PC-9 (cell line): ENCODE measurements at regions of chr10 and their contacts with region 1.

Region 1: GRCh38 chr10:77391605-77392235 is 245.9 kb downstream of the KCNMA1 start:
- DNase-seq: peak; percentile 53 to 74
- H3K4me3 ChIP-seq: no peak overlapping the region
- H3K27ac ChIP-seq: no peak overlapping the region
- H3K4me1 ChIP-seq: peaks cover 40% of the 10 kb centered on the region
- H3K27me3 ChIP-seq: no peaks in the 10 kb centered on the region
- CTCF ChIP-seq: peak; percentile 87

Region 2: DNA sequence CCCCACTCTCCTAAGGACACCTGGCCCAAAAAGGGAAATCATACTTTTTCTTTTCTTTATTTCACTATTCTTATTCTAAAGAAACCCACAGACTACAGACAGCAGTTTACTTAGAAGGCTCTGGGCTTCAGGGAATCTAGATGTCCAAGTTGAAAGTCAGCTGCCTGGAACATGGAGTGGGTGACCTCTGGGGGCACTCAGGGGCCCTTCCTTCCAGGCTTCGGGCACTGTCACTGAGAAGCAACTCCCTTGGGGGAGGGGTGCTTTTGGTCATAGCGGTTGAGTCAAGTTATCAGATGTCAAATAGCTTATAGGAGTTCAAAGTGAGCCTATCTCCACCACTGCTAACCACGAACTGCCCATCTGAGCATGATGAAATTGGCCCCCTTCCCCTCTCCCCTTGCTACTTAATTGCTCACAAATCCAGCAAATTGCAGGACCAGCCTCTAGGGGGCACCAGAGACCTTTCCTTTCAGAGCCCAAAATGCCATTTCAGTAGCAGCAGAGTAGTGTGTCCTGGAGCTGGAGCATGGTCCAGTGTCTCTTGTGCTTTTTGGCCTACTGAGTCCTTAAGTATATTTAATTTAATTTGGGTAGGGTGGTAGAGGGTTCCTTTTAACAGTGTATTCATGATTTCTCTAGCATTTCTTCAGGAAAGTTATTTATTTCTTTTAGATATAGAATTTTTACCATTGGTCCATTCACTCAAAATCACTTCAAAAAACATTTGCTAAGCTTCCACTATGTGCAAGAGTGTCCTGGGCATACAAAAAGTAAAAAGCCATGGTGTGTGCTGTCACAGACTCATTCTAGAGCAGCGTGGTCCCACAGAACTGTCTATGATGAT is 217.9 kb before region 1 on chr10:
- CTCF ChIA-PET with region 1: no interaction called
- POLR2A ChIA-PET with region 1: no interaction called
- intact Hi-C with region 1: loop called (anchors 1 kb)
- DNase-seq: peak; percentile 63 to 71
- H3K4me3 ChIP-seq: no peak overlapping the region
- H3K27ac ChIP-seq: no peak overlapping the region
- H3K4me1 ChIP-seq: peaks cover 6% of the 10 kb centered on the region
- H3K27me3 ChIP-seq: no peaks in the 10 kb centered on the region
- CTCF ChIP-seq: peak; percentile 98

Region 3: GRCh38 chr10:77251297-77252013 is 140.3 kb before region 1 on chr10:
- CTCF ChIA-PET with region 1: interaction called, 3 read pairs
- POLR2A ChIA-PET with region 1: no interaction called
- intact Hi-C with region 1: loop called (anchors 5 kb)
- DNase-seq: peak; percentile 29 to 34
- H3K4me3 ChIP-seq: no peak overlapping the region
- H3K27ac ChIP-seq: no peak overlapping the region
- H3K4me1 ChIP-seq: no peaks in the 10 kb centered on the region; the same call in 1 of the 2 replicates
- H3K27me3 ChIP-seq: no peaks in the 10 kb centered on the region
- CTCF ChIP-seq: peak; percentile 79

Region 4: DNA sequence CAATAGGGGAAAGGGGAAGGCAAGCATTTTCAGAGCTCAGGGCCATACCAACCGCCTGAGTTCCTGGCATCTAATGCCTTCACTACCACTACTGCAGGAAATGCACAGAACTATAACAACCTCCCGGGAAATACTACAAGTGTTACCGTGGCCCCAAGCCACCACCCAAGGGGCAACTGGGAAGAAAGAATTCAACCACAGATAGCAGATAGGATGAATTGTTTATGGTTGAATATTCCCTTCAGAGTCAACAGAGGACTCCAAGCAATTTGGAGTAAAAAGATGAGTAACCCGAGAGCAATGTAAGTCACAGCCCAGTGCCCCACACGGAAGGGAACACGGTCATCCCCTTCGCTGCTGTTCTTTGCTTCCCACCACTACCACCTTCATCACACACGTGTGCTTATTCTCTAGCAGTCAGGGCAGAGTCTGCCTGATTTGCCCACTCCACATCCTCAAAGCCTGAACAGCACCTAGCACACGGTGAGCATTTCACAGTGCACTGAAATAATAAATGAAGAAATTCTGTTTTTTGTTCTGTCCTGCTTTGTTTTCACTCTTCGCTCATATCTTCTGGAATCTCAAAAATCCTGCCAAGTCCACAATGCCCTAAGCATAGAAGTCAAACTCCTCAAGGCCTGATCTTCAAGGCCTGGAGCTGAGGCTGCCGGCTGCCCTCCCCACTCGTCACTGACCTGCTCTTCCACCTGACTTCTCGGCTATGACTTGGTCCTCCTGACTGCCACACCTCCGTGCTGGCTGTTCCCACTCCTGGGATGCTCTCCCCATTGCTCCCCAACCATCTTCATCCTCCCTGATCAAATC is 24.8 kb after region 1 on chr10:
- CTCF ChIA-PET with region 1: no interaction called
- POLR2A ChIA-PET with region 1: no interaction called
- intact Hi-C with region 1: loop called (anchors 2 kb)
- DNase-seq: peak; percentile 73 to 96
- H3K4me3 ChIP-seq: peak overlapping the region; percentile 14; the same call in 1 of the 2 replicates
- H3K27ac ChIP-seq: peak overlapping the region; percentile 82
- H3K4me1 ChIP-seq: peaks cover 36% of the 10 kb centered on the region
- H3K27me3 ChIP-seq: no peaks in the 10 kb centered on the region
- CTCF ChIP-seq: no peak

Region 5: GRCh38 chr10:77504873-77505257 is 113.1 kb after region 1 on chr10:
- CTCF ChIA-PET with region 1: interaction called, 4 read pairs
- POLR2A ChIA-PET with region 1: no interaction called
- intact Hi-C with region 1: loop called (anchors 2 kb)
- DNase-seq: peak; percentile 61 to 88
- H3K4me3 ChIP-seq: no peak overlapping the region
- H3K27ac ChIP-seq: peak overlapping the region; percentile 98
- H3K4me1 ChIP-seq: peaks cover 63% of the 10 kb centered on the region
- H3K27me3 ChIP-seq: no peaks in the 10 kb centered on the region
- CTCF ChIP-seq: peak; percentile 64; the same call in 1 of the 2 replicates

Region 6: DNA sequence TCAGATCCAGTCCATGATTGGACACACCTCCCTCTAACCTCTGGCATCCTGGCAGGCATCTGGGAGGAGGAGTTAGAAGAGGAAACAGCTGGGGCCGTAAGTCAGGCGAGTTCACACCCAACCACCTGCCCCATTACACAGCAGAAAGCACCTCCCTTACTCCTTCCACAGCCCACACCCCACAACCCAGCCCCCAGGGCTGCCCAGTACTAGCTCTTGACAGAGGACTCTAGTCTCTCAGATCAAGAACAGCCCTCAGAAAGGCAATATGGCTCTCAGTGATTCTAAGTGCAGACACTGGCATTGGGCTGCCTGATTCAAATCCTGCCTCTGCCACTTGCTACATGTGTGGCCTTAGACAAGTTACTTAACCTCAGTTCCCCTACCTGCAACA is 211.8 kb after region 1 on chr10:
- CTCF ChIA-PET with region 1: no interaction called
- POLR2A ChIA-PET with region 1: no interaction called
- intact Hi-C with region 1: loop called (anchors 1 kb)
- DNase-seq: peak in 1 of 2 experiments; percentile 30
- H3K4me3 ChIP-seq: no peak overlapping the region
- H3K27ac ChIP-seq: no peak overlapping the region
- H3K4me1 ChIP-seq: peaks cover 43% of the 10 kb centered on the region
- H3K27me3 ChIP-seq: no peaks in the 10 kb centered on the region
- CTCF ChIP-seq: no peak